Heart left ventricle (tissue), 16 donors: ENCODE measurements at regions of chr10 and their contacts with region 1.

Region 1: DNA sequence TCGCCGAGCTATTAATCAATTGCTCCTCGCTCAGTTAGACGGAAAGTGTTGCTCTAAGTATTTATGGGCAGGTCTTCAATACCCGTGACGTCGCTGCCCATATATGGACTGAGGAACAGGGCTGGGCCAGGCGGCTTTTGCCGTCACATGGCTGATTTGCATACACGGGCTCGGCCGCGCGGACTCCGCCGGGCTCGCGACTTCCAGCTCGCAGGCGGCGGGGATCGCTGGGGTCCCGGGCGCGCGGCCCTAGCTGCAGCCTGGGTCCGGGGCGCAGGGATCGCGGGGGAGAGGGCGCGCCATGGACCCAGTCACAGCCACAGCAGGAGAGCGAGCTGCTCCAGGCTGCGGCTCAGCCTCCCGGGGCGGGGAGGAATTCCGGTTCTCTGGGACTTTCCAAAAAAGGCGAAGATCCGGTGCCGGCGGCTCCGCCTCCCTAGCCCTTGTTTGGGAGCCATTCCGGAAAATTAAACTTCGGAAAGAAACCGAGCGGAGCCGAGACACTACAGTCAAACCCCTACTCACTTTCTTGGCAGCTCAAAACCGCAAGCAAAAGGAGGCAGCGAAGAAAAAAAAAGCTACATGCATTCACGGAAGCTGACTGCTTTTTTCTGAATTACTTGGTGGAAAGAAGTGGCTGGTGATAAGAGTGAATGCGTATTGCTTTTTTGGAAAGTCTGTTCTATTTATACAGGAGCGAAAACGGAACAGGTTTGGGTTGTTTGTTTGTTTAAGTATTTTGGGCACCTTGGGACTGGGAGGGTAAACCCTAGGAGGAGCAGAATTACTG is at the start of gene EGR2:
- DNase-seq: peak; percentile 93 to 95 (median 94)
- ATAC-seq: peak; percentile 75 to 93 (median 86)
- H3K4me3 ChIP-seq: peak within 1 kb of the TSS; percentile 37 to 91 (median 78)
- H3K27ac ChIP-seq: peak within 1 kb of the TSS; percentile 63 to 93 (median 87)
- H3K4me1 ChIP-seq: peaks cover 0 to 48% (median 28%) of the 10 kb centered on the region in 12 donors
- H3K27me3 ChIP-seq: peaks cover 0 to 50% (median 17%) of the 10 kb centered on the region in 9 donors
- CTCF ChIP-seq: no peak
- POLR2A ChIP-seq: no peak
- total RNA-seq, gene EGR2: 0.37 to 8.5 (median 1.9) TPM

Region 2: GRCh38 chr10:62437696-62438095 is 378.8 kb before region 1 on chr10:
- intact Hi-C with region 1: loop called in 2 of 10 experiments (anchors 5 kb)
- DNase-seq: no peak
- ATAC-seq: peak in 2 of 4 donors; percentile 57 to 59
- H3K4me3 ChIP-seq: no peak overlapping the region
- H3K27ac ChIP-seq: no peak overlapping the region
- H3K4me1 ChIP-seq: peaks cover 0 to 10% (median 0%) of the 10 kb centered on the region in 12 donors
- H3K27me3 ChIP-seq: no peaks in the 10 kb centered on the region
- CTCF ChIP-seq: peak; percentile 69 to 82 (median 75)
- POLR2A ChIP-seq: no peak

Region 3: DNA sequence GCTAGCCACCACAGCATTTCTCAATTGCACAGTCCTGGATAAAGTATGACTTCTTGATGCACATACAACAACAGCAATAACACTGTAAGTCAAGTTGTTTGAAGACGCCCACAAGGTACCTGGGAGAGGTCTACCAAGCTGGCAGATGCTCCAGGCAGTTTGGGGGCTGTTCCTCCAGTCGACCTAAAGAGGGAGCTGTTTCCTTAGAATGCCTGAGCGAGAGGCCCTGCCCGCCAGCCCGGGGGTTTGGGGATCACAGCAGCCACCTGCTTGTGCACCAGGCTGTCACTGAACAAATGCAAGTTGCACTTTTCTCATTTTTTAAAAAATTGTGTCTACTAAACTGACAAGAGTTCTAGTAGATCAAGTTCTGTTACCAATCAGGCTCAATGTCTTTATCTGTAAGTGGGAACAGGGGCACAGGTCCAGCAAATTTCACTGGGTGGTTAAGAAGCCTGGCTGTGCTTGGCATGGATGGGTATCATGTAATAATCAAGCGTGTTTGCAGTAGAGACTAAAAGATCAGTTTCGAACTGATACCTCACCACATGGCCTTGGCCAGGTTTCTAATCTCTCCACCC is 205.8 kb before region 1 on chr10:
- intact Hi-C with region 1: loop called in 9 of 10 experiments (anchors 1 to 5 kb)
- DNase-seq: peak; percentile 40 to 72 (median 54)
- ATAC-seq: peak in 3 of 4 donors; percentile 74 to 83 (median 80)
- H3K4me3 ChIP-seq: no peak overlapping the region
- H3K27ac ChIP-seq: no peak overlapping the region
- H3K4me1 ChIP-seq: peaks cover 0 to 19% (median 0%) of the 10 kb centered on the region in 12 donors
- H3K27me3 ChIP-seq: peaks cover 0 to 3% (median 0%) of the 10 kb centered on the region in 9 donors
- CTCF ChIP-seq: peak; percentile 66 to 85 (median 78)
- POLR2A ChIP-seq: no peak

Region 4: DNA sequence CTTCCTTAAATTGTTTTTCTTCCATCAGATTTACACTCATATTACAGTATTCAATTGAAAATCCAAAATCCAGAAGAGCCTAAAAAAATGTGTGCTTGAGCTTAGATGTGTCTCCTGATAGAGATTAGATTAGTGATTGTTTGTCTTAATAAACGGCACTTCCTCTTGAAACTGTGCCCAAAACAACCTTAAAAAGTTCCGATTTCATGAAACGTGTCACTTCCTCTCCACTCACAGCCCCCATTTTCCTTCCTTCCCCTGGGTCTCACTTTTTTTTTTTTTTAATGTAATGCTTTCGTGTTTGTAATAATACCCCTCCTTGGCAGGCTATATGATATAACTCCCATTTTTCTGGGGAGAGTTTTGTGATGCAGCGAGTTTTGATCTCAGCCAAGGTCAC is 126.8 kb before region 1 on chr10:
- intact Hi-C with region 1: loop called in 1 of 10 experiments (anchors 10 kb)
- DNase-seq: peak in 1 of 5 donors; percentile 16
- ATAC-seq: peak in 1 of 4 donors; percentile 86
- H3K4me3 ChIP-seq: no peak overlapping the region
- H3K27ac ChIP-seq: peak overlapping the region in 3 of 12 donors; percentile 5 to 47 (median 35)
- H3K4me1 ChIP-seq: peaks cover 0 to 33% (median 11%) of the 10 kb centered on the region in 12 donors
- H3K27me3 ChIP-seq: no peaks in the 10 kb centered on the region
- CTCF ChIP-seq: no peak
- POLR2A ChIP-seq: no peak

Region 5: GRCh38 chr10:62903828-62904227 is 87.3 kb after region 1 on chr10:
- intact Hi-C with region 1: no loop called
- DNase-seq: no peak
- ATAC-seq: peak; percentile 26 to 87 (median 78)
- H3K4me3 ChIP-seq: no peak overlapping the region
- H3K27ac ChIP-seq: peak overlapping the region in 4 of 12 donors; percentile 1 to 54 (median 14)
- H3K4me1 ChIP-seq: peaks cover 0 to 8% (median 0%) of the 10 kb centered on the region in 12 donors
- H3K27me3 ChIP-seq: no peaks in the 10 kb centered on the region
- CTCF ChIP-seq: no peak
- POLR2A ChIP-seq: no peak

Region 6: DNA sequence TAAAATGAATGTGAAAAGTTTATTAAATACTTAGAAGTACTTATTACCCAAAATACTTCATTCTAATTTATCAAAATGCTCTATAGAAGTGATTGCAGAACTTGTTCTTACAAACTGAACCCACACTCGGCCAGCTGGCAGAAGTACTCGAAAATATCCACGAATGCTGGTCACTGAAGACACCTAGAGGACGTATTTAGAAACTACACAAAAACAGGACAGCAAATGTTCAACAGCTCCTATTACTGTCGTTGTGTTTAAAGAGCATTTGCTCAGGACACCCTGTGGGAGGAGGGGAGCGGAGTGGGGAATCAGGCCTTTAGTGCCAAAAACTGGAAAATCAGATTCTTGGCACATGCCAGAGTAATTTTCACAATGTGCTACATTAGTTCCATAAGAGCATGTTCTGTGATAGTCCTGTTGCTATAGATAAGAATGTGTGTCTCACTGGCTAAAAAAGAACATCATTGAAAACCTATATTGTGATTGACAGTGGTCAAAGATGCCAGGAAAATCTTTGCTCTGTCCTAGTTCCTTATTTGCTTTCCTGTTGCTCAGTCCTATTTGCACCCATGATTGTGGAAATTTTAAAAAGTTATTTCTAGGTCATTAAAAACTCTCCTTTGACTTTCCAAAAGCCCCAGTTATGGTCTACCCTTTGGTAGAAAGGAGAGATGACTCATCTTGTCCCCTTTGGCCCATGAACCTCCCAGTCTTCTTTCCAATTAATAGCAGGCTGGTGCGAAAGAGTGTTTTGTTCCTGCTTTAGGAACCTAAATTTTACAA is 267.6 kb after region 1 on chr10:
- intact Hi-C with region 1: loop called in 8 of 10 experiments (anchors 2 to 10 kb)
- DNase-seq: peak in 4 of 5 donors; percentile 53 to 74 (median 56)
- ATAC-seq: peak; percentile 64 to 94 (median 82)
- H3K4me3 ChIP-seq: no peak overlapping the region
- H3K27ac ChIP-seq: peak overlapping the region in 6 of 12 donors; percentile 6 to 54 (median 20)
- H3K4me1 ChIP-seq: peaks cover 0 to 14% (median 0%) of the 10 kb centered on the region in 12 donors
- H3K27me3 ChIP-seq: no peaks in the 10 kb centered on the region
- CTCF ChIP-seq: peak; percentile 52 to 78 (median 70)
- POLR2A ChIP-seq: no peak